Activated CD4-positive, alpha-beta T cell treated with anti-CD3 and anti-CD28 coated beads for 36 hours (primary cell): ENCODE measurements at regions of chr4 and their contacts with region 1.

Region 1: GRCh38 chr4:167021545-167022155 is 212.6 kb downstream of the SPOCK3 start:
- DNase-seq: peak; percentile 76
- ATAC-seq: peak; percentile 30
- H3K4me3 Mint-ChIP-seq: no peak overlapping the region
- H3K27ac Mint-ChIP-seq: no peak overlapping the region
- H3K4me1 Mint-ChIP-seq: no peaks in the 10 kb centered on the region
- H3K27me3 Mint-ChIP-seq: no peaks in the 10 kb centered on the region

Region 2: DNA sequence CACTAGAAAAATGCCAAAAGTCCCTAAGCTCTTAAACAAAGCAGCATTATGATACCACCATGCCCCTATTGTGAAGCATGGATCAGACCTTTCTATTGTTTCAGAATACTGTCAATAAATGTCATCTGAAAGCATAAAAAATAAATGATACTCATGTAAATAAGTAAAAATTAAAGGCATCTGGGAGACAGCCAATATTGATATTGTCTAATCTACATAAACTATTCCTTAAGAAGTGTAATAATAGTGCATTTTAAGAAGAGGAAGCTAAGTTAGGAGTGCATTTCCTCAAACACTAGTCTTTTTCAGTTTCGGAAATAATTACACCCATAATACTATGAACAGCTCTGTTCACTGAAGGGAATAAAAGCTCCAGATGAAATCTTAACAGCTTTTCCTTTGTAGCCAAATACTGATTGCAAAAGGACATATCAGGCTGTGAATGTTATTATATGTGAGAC is 31.0 kb after region 1 on chr4:
- CTCF ChIA-PET with region 1: no interaction called
- POLR2A ChIA-PET with region 1: no interaction called
- intact Hi-C with region 1: no loop called
- DNase-seq: no peak
- ATAC-seq: no peak
- H3K4me3 Mint-ChIP-seq: no peak overlapping the region
- H3K27ac Mint-ChIP-seq: no peak overlapping the region
- H3K4me1 Mint-ChIP-seq: no peaks in the 10 kb centered on the region
- H3K27me3 Mint-ChIP-seq: no peaks in the 10 kb centered on the region

Region 3: DNA sequence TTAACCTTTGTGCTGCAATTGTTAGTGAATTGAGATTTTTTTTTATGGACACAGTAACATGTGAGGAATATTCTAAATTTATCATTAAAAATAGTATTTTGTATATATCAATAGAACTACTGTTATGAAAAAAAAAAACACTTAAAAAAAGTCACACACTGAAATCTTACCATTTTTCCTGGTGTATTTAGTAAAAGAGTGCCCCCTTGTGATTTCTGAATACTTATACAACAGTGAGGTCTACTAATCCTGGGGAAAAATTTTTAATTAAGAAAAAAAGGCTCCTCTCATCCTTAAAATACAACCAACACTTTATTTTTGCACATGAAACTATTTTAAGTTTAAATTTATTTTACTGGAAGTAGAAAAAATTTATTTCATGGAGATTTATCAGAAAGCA is 269.0 kb after region 1 on chr4:
- CTCF ChIA-PET with region 1: no interaction called
- POLR2A ChIA-PET with region 1: no interaction called
- intact Hi-C with region 1: loop called (anchors 5 kb)
- DNase-seq: no peak
- ATAC-seq: no peak
- H3K4me3 Mint-ChIP-seq: no peak overlapping the region
- H3K27ac Mint-ChIP-seq: no peak overlapping the region
- H3K4me1 Mint-ChIP-seq: no peaks in the 10 kb centered on the region
- H3K27me3 Mint-ChIP-seq: no peaks in the 10 kb centered on the region

Region 4: GRCh38 chr4:167622481-167623246 is 601.0 kb after region 1 on chr4:
- CTCF ChIA-PET with region 1: no interaction called
- POLR2A ChIA-PET with region 1: no interaction called
- intact Hi-C with region 1: loop called (anchors 1 to 5 kb)
- DNase-seq: peak; percentile 63
- ATAC-seq: peak; percentile 68
- H3K4me3 Mint-ChIP-seq: no peak overlapping the region
- H3K27ac Mint-ChIP-seq: no peak overlapping the region
- H3K4me1 Mint-ChIP-seq: no peaks in the 10 kb centered on the region
- H3K27me3 Mint-ChIP-seq: no peaks in the 10 kb centered on the region

Region 5: GRCh38 chr4:168076989-168077725 is 1055.5 kb after region 1 on chr4:
- CTCF ChIA-PET with region 1: no interaction called
- POLR2A ChIA-PET with region 1: no interaction called
- intact Hi-C with region 1: loop called (anchors 1 kb)
- DNase-seq: peak; percentile 71
- ATAC-seq: peak; percentile 61
- H3K4me3 Mint-ChIP-seq: no peak overlapping the region
- H3K27ac Mint-ChIP-seq: no peak overlapping the region
- H3K4me1 Mint-ChIP-seq: no peaks in the 10 kb centered on the region
- H3K27me3 Mint-ChIP-seq: peaks cover 4% of the 10 kb centered on the region

Region 6: DNA sequence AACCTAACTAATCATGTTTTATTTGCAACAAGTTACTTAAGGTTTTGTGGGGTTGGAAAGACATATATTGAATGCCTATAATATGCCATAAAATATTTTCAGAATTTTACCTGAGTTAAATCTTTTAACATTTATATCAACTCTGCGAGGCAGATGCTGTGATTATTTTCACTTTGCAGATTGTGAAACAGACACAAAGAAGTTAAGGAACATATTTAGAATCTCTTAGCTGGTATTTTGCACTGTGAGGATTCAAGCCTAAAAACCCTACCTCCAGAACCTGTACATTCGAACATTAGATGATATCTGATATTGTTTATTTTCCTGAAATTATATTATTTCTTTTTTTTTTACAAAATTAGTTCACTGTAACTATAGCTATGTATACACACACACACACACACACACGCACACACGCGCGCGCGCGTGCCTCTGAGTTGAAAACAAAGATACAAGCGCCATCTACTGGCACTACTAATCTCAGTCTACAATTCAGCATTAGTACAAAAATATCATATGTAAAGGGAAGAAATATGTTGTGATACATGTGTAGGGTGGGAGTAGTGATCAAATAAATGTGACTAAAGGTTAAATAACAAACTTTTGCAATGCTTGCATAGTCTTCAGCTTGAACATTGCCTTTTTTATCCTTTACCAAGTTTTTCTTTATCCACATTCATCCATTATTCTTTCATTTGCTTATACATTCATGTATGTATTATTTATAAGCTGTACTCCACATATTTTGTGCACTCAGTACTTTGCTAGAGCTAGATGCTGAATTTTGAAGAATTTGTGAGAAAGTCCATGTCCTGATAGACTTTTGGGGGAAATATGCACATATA is 1132.2 kb after region 1 on chr4:
- CTCF ChIA-PET with region 1: interaction called, 3 read pairs
- POLR2A ChIA-PET with region 1: no interaction called
- intact Hi-C with region 1: loop called (anchors 1 kb)
- DNase-seq: peak; percentile 69
- ATAC-seq: peak; percentile 75
- H3K4me3 Mint-ChIP-seq: no peak overlapping the region
- H3K27ac Mint-ChIP-seq: no peak overlapping the region
- H3K4me1 Mint-ChIP-seq: peaks cover 5% of the 10 kb centered on the region
- H3K27me3 Mint-ChIP-seq: no peaks in the 10 kb centered on the region